ENCODE measurements at regions of chr1 and their contacts with region 1.

Region 1: GRCh38 chr1:19606817-19607642 is 37.1 kb upstream of the NBL1 start:
- DNase-seq: peak; percentile 78 to 89 (median 79)
- H3K4me3 ChIP-seq: peak overlapping the region in 1 of 2 donors; percentile 20
- H3K4me3 Mint-ChIP-seq: peak overlapping the region; percentile 39 to 86 (median 76)
- H3K27ac ChIP-seq: peak overlapping the region; percentile 44
- H3K27ac Mint-ChIP-seq: peak overlapping the region; percentile 83 to 100 (median 92)
- H3K4me1 ChIP-seq: peaks cover 60% of the 10 kb centered on the region
- H3K4me1 Mint-ChIP-seq: peaks cover 39 to 77% (median 61%) of the 10 kb centered on the region in 4 donors
- H3K27me3 ChIP-seq: no peaks in the 10 kb centered on the region
- H3K27me3 Mint-ChIP-seq: no peaks in the 10 kb centered on the region

Region 2: DNA sequence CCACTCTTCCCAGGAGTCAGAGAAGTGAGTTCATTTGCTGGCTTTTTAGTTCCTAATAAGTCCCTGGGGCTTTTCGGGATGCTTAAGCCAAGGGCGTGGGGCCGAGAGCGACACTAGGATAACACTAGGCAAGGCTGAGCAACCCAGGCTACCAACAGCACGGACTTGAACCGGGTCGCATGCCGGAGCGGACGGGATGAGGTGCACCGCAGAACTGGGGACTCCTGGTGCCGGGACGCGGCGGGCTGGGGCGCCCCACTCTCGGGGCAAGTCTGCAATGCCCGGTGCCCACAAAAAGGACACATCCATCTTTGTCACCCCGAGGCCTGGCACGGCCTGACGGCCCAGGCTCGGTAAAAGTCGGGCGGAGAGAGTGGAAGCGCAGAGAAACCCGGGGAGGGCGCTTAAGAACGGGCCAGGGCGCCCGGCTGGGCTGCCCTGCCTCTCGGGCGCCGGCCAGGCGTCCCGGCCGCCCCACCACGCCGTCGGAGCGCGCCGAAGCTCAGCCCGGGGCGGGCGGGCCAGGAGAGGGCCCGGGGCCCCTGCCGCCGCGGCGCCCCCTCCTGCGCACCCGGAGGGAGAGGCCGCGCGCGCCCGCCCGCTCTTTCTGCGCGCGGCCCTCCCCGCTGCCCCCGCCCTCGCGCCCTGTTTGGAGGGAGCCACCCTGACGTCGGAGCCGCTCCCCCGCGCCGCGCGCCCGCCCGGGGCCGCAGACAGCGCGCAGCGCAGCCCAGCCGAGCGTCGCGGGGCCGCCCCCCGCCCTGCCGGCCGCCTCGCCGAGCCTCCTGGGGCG is 36.8 kb after region 1 on chr1 and contains the start of gene NBL1:
- CTCF ChIA-PET with region 1: no interaction called
- POLR2A ChIA-PET with region 1: interaction called, 10 read pairs
- intact Hi-C with region 1: loop called (anchors 2 kb)
- DNase-seq: peak; percentile 72 to 83 (median 79)
- H3K4me3 ChIP-seq: peak within 1 kb of the TSS; percentile 36 to 67
- H3K4me3 Mint-ChIP-seq: peak within 1 kb of the TSS; percentile 95 to 99 (median 97)
- H3K27ac ChIP-seq: peak within 1 kb of the TSS; percentile 60
- H3K27ac Mint-ChIP-seq: peak within 1 kb of the TSS; percentile 94 to 97 (median 96)
- H3K4me1 ChIP-seq: peaks cover 25% of the 10 kb centered on the region
- H3K4me1 Mint-ChIP-seq: peaks cover 19 to 43% (median 29%) of the 10 kb centered on the region in 4 donors
- H3K27me3 ChIP-seq: no peaks in the 10 kb centered on the region
- H3K27me3 Mint-ChIP-seq: peaks cover 6 to 7% of the 10 kb centered on the region in 2 donors
- total RNA-seq, gene NBL1: 22.8 to 24.6 TPM

Measured in CD4-positive, alpha-beta memory T cell (primary cell).